HepG2 (cell line): ENCODE measurements at regions of chr5 and their contacts with region 1.

Region 1: GRCh38 chr5:5278815-5279381 is 138.8 kb downstream of the ADAMTS16 start:
- DNase-seq: no peak
- ATAC-seq: no peak
- H3K4me3 ChIP-seq: no peak overlapping the region
- H3K27ac ChIP-seq: no peak overlapping the region
- H3K4me1 ChIP-seq: no peaks in the 10 kb centered on the region
- H3K27me3 ChIP-seq: no peaks in the 10 kb centered on the region
- CTCF ChIP-seq: no peak
- EP300 ChIP-seq: no peak
- POLR2A ChIP-seq: no peak
- RAD21 ChIP-seq: no peak

Region 2: DNA sequence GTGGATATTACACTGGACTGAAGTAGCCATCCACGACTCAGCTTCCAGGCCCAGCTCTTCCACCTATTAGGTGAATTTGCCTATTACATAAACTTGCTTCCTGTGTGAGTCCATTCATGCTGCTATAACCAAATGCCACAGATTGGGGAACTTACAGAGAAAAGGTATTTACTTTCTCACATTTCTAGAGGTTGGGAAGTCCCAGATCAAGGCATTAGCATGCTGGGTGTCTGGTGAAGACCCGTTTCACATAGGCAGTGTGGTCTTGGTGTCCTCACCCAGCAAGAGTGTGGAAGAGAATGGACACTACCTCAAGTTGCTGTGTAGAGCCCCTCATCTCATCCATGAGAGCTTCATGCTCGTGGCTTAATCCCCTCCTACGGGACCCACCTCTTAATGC is 1400.6 kb before region 1 on chr5:
- CTCF ChIA-PET with region 1: no interaction called
- POLR2A ChIA-PET with region 1: no interaction called
- in situ Hi-C with region 1: no loop called
- intact Hi-C with region 1: no loop called
- DNase-seq: no peak
- ATAC-seq: no peak
- H3K4me3 ChIP-seq: no peak overlapping the region
- H3K27ac ChIP-seq: no peak overlapping the region
- H3K4me1 ChIP-seq: no peaks in the 10 kb centered on the region
- H3K27me3 ChIP-seq: no peaks in the 10 kb centered on the region
- CTCF ChIP-seq: no peak
- EP300 ChIP-seq: no peak
- POLR2A ChIP-seq: no peak
- RAD21 ChIP-seq: no peak

Region 3: DNA sequence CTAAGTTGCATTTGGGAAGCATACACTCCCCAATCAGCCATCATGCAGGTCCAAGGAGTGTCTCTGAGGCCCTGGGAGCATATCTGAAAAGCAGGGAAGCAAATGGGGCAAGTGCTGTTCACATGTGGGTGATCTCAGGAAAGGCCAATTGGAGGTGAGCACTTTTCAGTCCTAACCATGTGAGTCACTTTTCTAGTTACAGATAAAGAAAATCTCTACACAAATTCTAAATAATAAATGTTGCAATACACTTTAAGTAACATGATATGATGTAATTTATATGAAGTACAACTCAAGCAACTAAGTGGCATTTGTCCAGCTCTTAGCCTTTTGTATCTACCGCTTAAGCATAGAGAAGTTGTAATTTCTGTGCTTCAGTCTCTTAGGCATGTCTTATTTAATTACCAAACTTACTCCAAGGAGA is 120.4 kb before region 1 on chr5:
- CTCF ChIA-PET with region 1: no interaction called
- POLR2A ChIA-PET with region 1: no interaction called
- in situ Hi-C with region 1: no loop called
- intact Hi-C with region 1: no loop called
- DNase-seq: no peak
- ATAC-seq: no peak
- H3K4me3 ChIP-seq: no peak overlapping the region
- H3K27ac ChIP-seq: no peak overlapping the region
- H3K4me1 ChIP-seq: no peaks in the 10 kb centered on the region
- H3K27me3 ChIP-seq: no peaks in the 10 kb centered on the region
- CTCF ChIP-seq: no peak
- EP300 ChIP-seq: no peak
- POLR2A ChIP-seq: no peak
- RAD21 ChIP-seq: no peak

Region 4: GRCh38 chr5:5505815-5506214 is 226.9 kb after region 1 on chr5:
- CTCF ChIA-PET with region 1: no interaction called
- POLR2A ChIA-PET with region 1: no interaction called
- in situ Hi-C with region 1: no loop called
- intact Hi-C with region 1: loop called (anchors 5 kb)
- DNase-seq: no peak
- ATAC-seq: no peak
- H3K4me3 ChIP-seq: no peak overlapping the region
- H3K27ac ChIP-seq: no peak overlapping the region
- H3K4me1 ChIP-seq: no peaks in the 10 kb centered on the region
- H3K27me3 ChIP-seq: peaks cover 0 to 4% of the 10 kb centered on the region in 2 experiments; a peak in 1 of 5 replicates
- CTCF ChIP-seq: no peak
- EP300 ChIP-seq: no peak
- POLR2A ChIP-seq: no peak
- RAD21 ChIP-seq: no peak